ENCODE measurements at regions of chr10 and their contacts with region 1.

Region 1: GRCh38 chr10:132593900-132594876 is 56.6 kb downstream of the INPP5A start:
- DNase-seq: no peak
- ATAC-seq: peak; percentile 74
- H3K4me3 Mint-ChIP-seq: peak overlapping the region; percentile 70
- H3K27ac Mint-ChIP-seq: peak overlapping the region; percentile 90
- H3K4me1 Mint-ChIP-seq: peaks cover 86% of the 10 kb centered on the region
- H3K27me3 Mint-ChIP-seq: no peaks in the 10 kb centered on the region
- CTCF ChIP-seq: no peak

Region 2: GRCh38 chr10:132560241-132560731 is 33.9 kb before region 1 on chr10:
- CTCF ChIA-PET with region 1: no interaction called
- POLR2A ChIA-PET with region 1: no interaction called
- intact Hi-C with region 1: loop called (anchors 1 kb)
- DNase-seq: no peak
- ATAC-seq: peak; percentile 51
- H3K4me3 Mint-ChIP-seq: peak overlapping the region; percentile 60
- H3K27ac Mint-ChIP-seq: peak overlapping the region; percentile 76
- H3K4me1 Mint-ChIP-seq: peaks cover 53% of the 10 kb centered on the region
- H3K27me3 Mint-ChIP-seq: no peaks in the 10 kb centered on the region
- CTCF ChIP-seq: no peak